Activated CD4-positive, alpha-beta T cell treated with anti-CD3 and anti-CD28 coated beads, Interleukin-2, amount 10 ng/mL, durations not matched to agents 24 days and 14 days (primary cell): ENCODE measurements at regions of chr12 and their contacts with region 1.

Region 1: GRCh38 chr12:116818948-116819832 is 62.1 kb downstream of the HRK start:
- DNase-seq: peak; percentile 97
- H3K4me3 Mint-ChIP-seq: peak overlapping the region; percentile 96
- H3K27ac Mint-ChIP-seq: peak overlapping the region; percentile 98
- H3K4me1 Mint-ChIP-seq: peaks cover 22% of the 10 kb centered on the region
- H3K27me3 Mint-ChIP-seq: peaks cover 12% of the 10 kb centered on the region

Region 2: DNA sequence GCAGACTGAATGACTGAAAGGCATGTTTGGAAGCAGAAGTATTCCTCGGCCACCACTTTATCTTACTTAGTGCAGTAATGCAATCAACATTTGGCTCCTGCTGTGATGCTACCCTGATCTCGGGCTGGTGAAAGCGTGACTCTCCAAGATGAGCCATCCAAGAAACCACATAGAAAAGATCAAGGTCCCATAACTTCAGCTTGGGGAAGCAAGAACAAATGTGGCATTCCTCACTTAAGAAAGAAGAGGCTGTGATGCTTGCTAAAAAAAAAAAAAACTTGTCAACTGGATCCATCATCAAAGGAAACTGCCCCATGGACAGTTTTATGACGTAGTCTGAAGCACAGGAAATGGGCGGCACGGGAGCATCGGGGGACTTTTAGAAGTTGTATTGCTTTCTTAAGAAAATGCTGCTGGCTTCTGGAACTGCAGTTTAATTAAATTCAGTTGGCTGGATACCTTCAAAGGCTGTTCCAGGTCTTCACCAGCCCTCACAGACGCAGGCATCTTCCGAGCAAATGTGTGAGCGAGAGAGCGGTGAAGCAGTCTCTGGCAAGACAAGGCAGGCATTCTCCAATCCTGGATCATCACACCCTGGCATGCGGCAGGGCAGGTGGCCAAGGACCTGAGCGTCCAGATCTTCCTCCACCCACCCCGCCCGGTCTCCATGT is 298.3 kb before region 1 on chr12:
- intact Hi-C with region 1: no loop called
- DNase-seq: peak; percentile 63
- H3K4me3 Mint-ChIP-seq: no peak overlapping the region
- H3K27ac Mint-ChIP-seq: no peak overlapping the region
- H3K4me1 Mint-ChIP-seq: peaks cover 7% of the 10 kb centered on the region
- H3K27me3 Mint-ChIP-seq: peaks cover 18% of the 10 kb centered on the region

Region 3: GRCh38 chr12:117190210-117190781 is 371.1 kb after region 1 on chr12 and contains the start of gene FBXO21:
- intact Hi-C with region 1: loop called (anchors 5 kb)
- DNase-seq: peak; percentile 98
- H3K4me3 Mint-ChIP-seq: peak within 1 kb of the TSS; percentile 94
- H3K27ac Mint-ChIP-seq: peak within 1 kb of the TSS; percentile 75
- H3K4me1 Mint-ChIP-seq: peaks cover 23% of the 10 kb centered on the region
- H3K27me3 Mint-ChIP-seq: peaks cover 15% of the 10 kb centered on the region
- total RNA-seq, gene FBXO21: 28.0 and 28.1 TPM in 2 replicates